Activated B cell treated with CpG ODN at 0.5 μM for 24 hours (primary cell): ENCODE measurements at regions of chr5 and their contacts with region 1.

Region 1: GRCh38 chr5:175534070-175534932 is 55.9 kb downstream of the SFXN1 start:
- DNase-seq: peak; percentile 50
- ATAC-seq: peak; percentile 97
- H3K4me3 Mint-ChIP-seq: no peak overlapping the region
- H3K27ac Mint-ChIP-seq: no peak overlapping the region
- H3K4me1 Mint-ChIP-seq: peaks cover 7% of the 10 kb centered on the region
- H3K27me3 Mint-ChIP-seq: no peaks in the 10 kb centered on the region
- CTCF ChIP-seq: peak; percentile 59

Region 2: DNA sequence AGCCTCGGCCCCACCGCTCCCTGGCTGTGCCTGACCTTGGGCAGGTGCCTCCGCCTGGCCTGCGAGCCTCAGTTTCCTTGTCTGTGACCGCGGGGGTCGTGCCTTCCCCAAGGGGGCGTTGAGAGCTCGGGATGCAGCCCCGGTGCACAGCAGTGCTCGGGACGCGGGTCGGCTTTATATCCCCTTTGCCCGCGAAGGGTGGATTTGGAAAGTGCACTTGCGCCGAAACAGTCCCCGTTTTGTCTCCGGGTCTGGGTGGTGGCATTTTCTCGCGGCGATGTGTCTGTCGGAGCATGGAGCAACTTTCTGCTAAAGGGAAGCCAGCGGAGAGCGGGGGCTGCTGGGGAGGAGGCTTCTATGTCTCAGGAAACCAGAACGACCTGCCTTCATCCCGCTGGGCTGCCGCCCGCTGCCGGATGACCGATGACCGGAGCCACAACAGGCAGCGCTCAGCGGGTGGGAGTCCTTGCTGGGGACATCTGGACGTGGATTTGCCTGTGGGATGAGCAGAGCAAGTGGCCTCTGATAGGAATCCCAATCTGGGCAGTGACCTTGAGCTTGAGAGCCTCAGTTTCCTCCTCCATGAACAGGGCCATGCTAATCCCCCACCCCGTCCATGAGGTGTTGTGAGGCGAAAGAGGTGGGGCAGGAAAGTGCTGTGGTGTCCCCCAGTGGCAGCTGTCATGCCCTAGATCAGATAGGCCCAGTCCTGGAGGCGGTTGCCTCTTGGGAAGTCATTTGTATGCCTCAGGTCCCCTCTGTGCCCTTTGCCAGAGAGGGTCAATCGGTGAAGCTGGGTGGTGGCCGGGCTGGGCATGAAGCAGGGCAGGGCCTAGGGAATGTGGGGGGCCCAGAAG is 124.2 kb after region 1 on chr5:
- CTCF ChIA-PET with region 1: no interaction called
- POLR2A ChIA-PET with region 1: no interaction called
- intact Hi-C with region 1: no loop called
- DNase-seq: no peak
- ATAC-seq: no peak
- H3K4me3 Mint-ChIP-seq: peak overlapping the region; percentile 50
- H3K27ac Mint-ChIP-seq: no peak overlapping the region
- H3K4me1 Mint-ChIP-seq: peaks cover 15% of the 10 kb centered on the region
- H3K27me3 Mint-ChIP-seq: peaks cover 57% of the 10 kb centered on the region
- CTCF ChIP-seq: no peak

Region 3: GRCh38 chr5:175700991-175701390 is 166.7 kb after region 1 on chr5:
- CTCF ChIA-PET with region 1: no interaction called
- POLR2A ChIA-PET with region 1: no interaction called
- intact Hi-C with region 1: loop called (anchors 10 kb)
- DNase-seq: no peak
- ATAC-seq: no peak
- H3K4me3 Mint-ChIP-seq: no peak overlapping the region
- H3K27ac Mint-ChIP-seq: no peak overlapping the region
- H3K4me1 Mint-ChIP-seq: peaks cover 5% of the 10 kb centered on the region
- H3K27me3 Mint-ChIP-seq: peaks cover 4% of the 10 kb centered on the region
- CTCF ChIP-seq: no peak